ENCODE measurements at regions of chr7 and their contacts with region 1.

Region 1: GRCh38 chr7:128425850-128426249 is 16.1 kb upstream of the IMPDH1 start:
- DNase-seq: peak; percentile 87
- H3K4me3 Mint-ChIP-seq: no peak overlapping the region
- H3K27ac Mint-ChIP-seq: no peak overlapping the region
- H3K4me1 Mint-ChIP-seq: peaks cover 7% of the 10 kb centered on the region
- H3K27me3 Mint-ChIP-seq: peaks cover 33% of the 10 kb centered on the region

Region 2: DNA sequence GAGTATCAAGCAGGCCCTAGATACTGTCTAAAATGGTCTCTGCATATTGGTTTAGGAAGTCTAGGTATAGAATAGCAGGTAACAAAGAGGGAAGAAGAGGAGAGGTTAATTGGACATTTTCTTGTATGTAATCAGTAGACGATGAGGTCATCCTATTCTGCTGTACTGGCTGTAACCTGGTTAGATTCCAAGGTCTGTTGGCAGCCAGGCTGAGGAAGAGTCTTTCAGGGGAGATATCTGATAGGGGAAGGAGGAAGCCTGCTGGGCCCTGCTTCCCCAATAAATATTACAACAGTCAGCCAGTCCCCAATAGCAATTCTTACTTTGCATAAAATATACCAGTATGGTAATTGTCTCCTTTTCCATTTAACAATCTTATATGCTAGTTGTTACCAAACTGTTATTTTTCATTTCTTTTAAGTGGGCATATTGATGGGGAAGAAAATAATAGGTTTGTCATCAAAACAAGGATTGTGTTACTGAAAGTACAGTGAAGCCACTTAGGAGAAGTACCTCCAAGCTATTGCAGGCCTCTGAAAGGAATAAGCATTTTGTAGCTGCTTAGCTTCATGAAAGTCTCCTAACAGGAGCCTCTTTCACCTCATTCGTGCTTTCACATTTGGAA is 581.0 kb before region 1 on chr7:
- CTCF ChIA-PET with region 1: no interaction called
- DNase-seq: no peak
- H3K4me3 Mint-ChIP-seq: no peak overlapping the region
- H3K27ac Mint-ChIP-seq: no peak overlapping the region
- H3K4me1 Mint-ChIP-seq: no peaks in the 10 kb centered on the region
- H3K27me3 Mint-ChIP-seq: no peaks in the 10 kb centered on the region

Region 3: GRCh38 chr7:128135515-128136214 is 290.2 kb before region 1 on chr7:
- CTCF ChIA-PET with region 1: no interaction called
- DNase-seq: peak; percentile 63
- H3K4me3 Mint-ChIP-seq: peak overlapping the region; percentile 68
- H3K27ac Mint-ChIP-seq: no peak overlapping the region
- H3K4me1 Mint-ChIP-seq: peaks cover 14% of the 10 kb centered on the region
- H3K27me3 Mint-ChIP-seq: peaks cover 65% of the 10 kb centered on the region

Region 4: GRCh38 chr7:128343554-128344430 is 82.1 kb before region 1 on chr7 and contains the start of gene RBM28:
- CTCF ChIA-PET with region 1: interaction called, 51 read pairs
- DNase-seq: peak; percentile 90
- H3K4me3 Mint-ChIP-seq: peak within 1 kb of the TSS; percentile 88
- H3K27ac Mint-ChIP-seq: peak within 1 kb of the TSS; percentile 92
- H3K4me1 Mint-ChIP-seq: peaks cover 26% of the 10 kb centered on the region
- H3K27me3 Mint-ChIP-seq: peaks cover 11% of the 10 kb centered on the region

Region 5: DNA sequence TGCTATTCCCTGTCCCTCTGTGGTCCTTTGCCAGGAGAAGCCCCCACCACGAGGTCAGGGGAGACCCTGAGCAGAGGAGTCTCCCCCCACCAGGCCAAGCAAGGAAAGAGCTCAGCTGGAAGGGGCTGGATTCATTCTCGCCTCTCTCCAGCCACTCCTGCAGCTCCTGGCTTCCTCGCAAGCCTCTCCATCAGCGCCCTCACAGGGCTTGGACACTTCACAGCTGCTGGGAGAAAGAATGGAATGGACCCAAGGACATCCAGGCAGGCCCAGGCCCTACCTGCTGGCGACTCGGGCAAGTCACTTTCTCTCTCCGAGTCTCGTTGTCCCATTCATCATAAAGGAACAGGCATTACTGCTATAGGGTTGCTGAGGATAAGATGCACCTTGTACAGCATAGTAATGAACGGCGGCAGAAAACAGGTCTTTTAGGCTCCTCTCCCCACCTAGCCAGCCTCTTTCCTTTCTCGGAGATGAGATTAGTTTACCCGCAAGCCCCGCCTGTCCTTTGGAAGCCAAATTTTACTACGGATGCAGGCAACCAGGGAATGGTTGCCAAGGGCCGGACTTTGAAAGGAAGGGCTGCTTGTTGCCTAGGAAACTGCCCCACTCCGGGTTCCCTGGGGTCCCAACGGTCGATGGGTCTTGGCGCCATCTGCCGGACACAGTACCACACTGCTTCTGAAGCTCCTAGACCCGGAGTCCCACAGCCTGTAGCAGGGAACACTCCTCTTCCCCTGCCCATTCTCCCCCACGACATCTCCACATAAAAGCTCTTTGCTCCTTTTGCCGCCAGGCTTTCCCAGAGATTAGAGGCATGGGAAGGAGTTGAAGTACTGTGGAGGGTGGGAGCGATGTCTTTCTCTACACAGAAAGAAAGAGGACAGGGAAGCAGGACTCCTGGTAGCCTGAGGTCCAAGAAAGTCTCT is 38.4 kb before region 1 on chr7:
- CTCF ChIA-PET with region 1: interaction called, 51 read pairs
- DNase-seq: peak; percentile 78
- H3K4me3 Mint-ChIP-seq: no peak overlapping the region
- H3K27ac Mint-ChIP-seq: no peak overlapping the region
- H3K4me1 Mint-ChIP-seq: no peaks in the 10 kb centered on the region
- H3K27me3 Mint-ChIP-seq: peaks cover 42% of the 10 kb centered on the region

Region 6: GRCh38 chr7:128409596-128410160 is 16.2 kb before region 1 on chr7 and contains the start of gene IMPDH1:
- CTCF ChIA-PET with region 1: interaction called, 166 read pairs
- DNase-seq: peak; percentile 91
- H3K4me3 Mint-ChIP-seq: peak within 1 kb of the TSS; percentile 91
- H3K27ac Mint-ChIP-seq: peak within 1 kb of the TSS; percentile 84
- H3K4me1 Mint-ChIP-seq: peaks cover 41% of the 10 kb centered on the region
- H3K27me3 Mint-ChIP-seq: peaks cover 67% of the 10 kb centered on the region

Region 7: DNA sequence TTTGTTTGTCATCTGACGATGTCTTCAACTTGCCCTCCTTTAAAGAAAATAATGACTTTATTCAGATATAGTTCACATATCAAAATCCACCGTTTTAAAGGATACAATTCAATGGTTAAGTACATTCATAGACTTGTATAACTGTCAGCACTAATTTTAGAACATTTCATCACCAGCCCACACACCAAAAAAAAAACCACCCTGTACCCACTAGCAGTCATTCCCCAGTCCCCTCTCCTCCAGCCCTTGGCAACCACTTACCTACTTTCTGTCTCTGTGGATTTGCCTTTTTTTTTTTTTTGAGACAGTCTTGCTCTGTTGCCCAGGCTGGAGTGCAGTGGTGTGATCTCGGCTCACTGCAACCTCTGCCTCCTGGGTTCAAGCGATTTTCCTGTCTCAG is 24.6 kb after region 1 on chr7:
- CTCF ChIA-PET with region 1: interaction called, 25 read pairs
- DNase-seq: no peak
- H3K4me3 Mint-ChIP-seq: no peak overlapping the region
- H3K27ac Mint-ChIP-seq: no peak overlapping the region
- H3K4me1 Mint-ChIP-seq: peaks cover 20% of the 10 kb centered on the region
- H3K27me3 Mint-ChIP-seq: peaks cover 53% of the 10 kb centered on the region

Region 8: DNA sequence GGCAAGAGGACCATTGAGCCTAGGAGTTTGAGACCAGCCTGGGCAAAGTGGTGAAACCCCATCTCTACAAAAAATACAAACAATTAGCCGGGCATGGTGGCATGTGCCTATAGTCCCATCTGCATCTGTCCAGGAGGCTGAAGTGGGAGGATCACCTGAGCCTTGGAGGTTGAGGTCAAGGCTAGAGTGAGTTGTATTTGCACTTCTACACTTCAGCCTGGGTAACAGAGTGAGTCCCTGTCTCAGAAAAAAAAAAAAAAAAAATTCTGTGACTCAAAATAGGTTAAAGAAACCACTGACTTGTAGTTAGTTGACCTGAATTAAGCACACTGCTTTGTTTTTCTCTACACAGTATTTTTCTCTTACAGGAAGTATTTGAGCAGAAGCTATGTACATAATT is 125.1 kb after region 1 on chr7:
- CTCF ChIA-PET with region 1: no interaction called
- DNase-seq: no peak
- H3K4me3 Mint-ChIP-seq: no peak overlapping the region
- H3K27ac Mint-ChIP-seq: no peak overlapping the region
- H3K4me1 Mint-ChIP-seq: no peaks in the 10 kb centered on the region
- H3K27me3 Mint-ChIP-seq: no peaks in the 10 kb centered on the region

Measured in activated naive CD4-positive, alpha-beta T cell treated with anti-CD3 and anti-CD28 coated beads, Interleukin-2, amount 10 ng/mL, durations not matched to agents 7 days and 5 days (primary cell).